ENCODE measurements at regions of chr12 and their contacts with region 1.

Region 1: GRCh38 chr12:6620137-6620884 is 13.1 kb upstream of the CHD4 start:
- DNase-seq: peak in 2 of 5 donors; percentile 50 to 62
- H3K4me3 ChIP-seq: no peak overlapping the region
- H3K4me3 Mint-ChIP-seq: peak overlapping the region in 3 of 7 donors; percentile 27 to 71 (median 55)
- H3K27ac ChIP-seq: no peak overlapping the region
- H3K27ac Mint-ChIP-seq: peak overlapping the region in 4 of 8 donors; percentile 46 to 85 (median 77)
- H3K4me1 ChIP-seq: no peaks in the 10 kb centered on the region
- H3K4me1 Mint-ChIP-seq: peaks cover 6 to 38% (median 18%) of the 10 kb centered on the region in 3 donors
- H3K27me3 ChIP-seq: no peaks in the 10 kb centered on the region
- H3K27me3 Mint-ChIP-seq: no peaks in the 10 kb centered on the region

Region 2: DNA sequence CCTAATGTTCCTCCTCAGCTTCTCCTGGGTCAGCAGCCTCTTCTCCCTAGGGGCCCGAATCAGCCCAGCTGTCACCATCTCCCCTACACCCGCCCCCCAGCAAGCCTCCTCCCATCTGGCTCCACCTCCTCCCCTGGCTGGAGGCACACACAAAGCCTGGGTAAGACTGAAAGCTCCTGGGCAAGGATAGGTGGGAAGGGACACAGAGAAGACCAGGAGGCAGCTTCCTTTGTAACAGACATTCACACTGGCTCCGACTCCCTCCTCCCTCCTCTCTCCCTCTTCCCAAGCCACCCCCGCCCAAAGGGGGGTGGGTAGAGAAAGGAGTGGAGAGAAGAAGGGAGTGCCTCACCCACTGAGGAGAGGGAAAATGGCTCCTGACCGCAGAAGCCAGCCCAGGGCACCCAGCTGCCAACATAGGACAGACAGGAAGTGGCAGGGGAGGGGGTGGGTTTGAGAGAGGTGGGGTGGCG is 17.2 kb before region 1 on chr12:
- CTCF ChIA-PET with region 1: interaction called, 12 read pairs
- POLR2A ChIA-PET with region 1: interaction called, 5 read pairs
- DNase-seq: peak in 4 of 5 donors; percentile 32 to 65 (median 47)
- H3K4me3 ChIP-seq: peak overlapping the region; percentile 95
- H3K4me3 Mint-ChIP-seq: peak overlapping the region in 4 of 7 donors; percentile 25 to 87 (median 78)
- H3K27ac ChIP-seq: peak overlapping the region; percentile 12
- H3K27ac Mint-ChIP-seq: peak overlapping the region; percentile 86 to 97 (median 94)
- H3K4me1 ChIP-seq: peaks cover 46% of the 10 kb centered on the region
- H3K4me1 Mint-ChIP-seq: peaks cover 46 to 52% (median 50%) of the 10 kb centered on the region in 3 donors
- H3K27me3 ChIP-seq: no peaks in the 10 kb centered on the region
- H3K27me3 Mint-ChIP-seq: peaks cover 0 to 3% of the 10 kb centered on the region in 2 donors

Region 3: DNA sequence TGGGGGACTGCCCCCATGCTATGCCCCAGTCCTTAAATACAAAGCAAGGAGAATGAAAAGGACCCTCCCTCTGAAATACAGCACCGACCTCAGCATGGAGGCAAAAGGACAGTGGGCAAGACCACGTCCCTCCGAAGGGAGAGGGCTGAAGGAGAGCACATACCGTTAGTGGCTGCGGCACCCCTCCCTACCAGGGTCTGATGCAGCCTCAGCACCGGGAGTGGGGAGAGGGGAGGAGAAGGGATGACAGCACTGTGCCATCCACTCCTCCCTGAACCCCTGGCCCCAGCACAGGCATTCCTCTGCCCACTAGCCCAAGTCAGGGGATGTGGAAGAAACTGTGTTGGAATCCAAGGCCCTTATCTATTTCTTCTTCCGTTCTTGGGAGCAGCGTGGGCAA is 30.5 kb after region 1 on chr12:
- CTCF ChIA-PET with region 1: no interaction called
- POLR2A ChIA-PET with region 1: no interaction called
- DNase-seq: no peak
- H3K4me3 ChIP-seq: no peak overlapping the region
- H3K4me3 Mint-ChIP-seq: no peak overlapping the region
- H3K27ac ChIP-seq: no peak overlapping the region
- H3K27ac Mint-ChIP-seq: peak overlapping the region in 1 of 8 donors; percentile 23
- H3K4me1 ChIP-seq: no peaks in the 10 kb centered on the region
- H3K4me1 Mint-ChIP-seq: peaks cover 9 to 12% (median 11%) of the 10 kb centered on the region in 3 donors
- H3K27me3 ChIP-seq: no peaks in the 10 kb centered on the region
- H3K27me3 Mint-ChIP-seq: no peaks in the 10 kb centered on the region

Measured in CD8-positive, alpha-beta memory T cell (primary cell).